CD8-positive, alpha-beta memory T cell (primary cell): ENCODE measurements at regions of chr12 and their contacts with region 1.

Region 1: GRCh38 chr12:11981121-11981733 is 89.5 kb upstream of the BCL2L14 start:
- DNase-seq: peak; percentile 3 to 88 (median 65)
- H3K4me3 ChIP-seq: peak overlapping the region; percentile 35
- H3K4me3 Mint-ChIP-seq: peak overlapping the region; percentile 0 to 76 (median 58)
- H3K27ac ChIP-seq: peak overlapping the region; percentile 49
- H3K27ac Mint-ChIP-seq: peak overlapping the region; percentile 55 to 99 (median 94)
- H3K4me1 ChIP-seq: peaks cover 32% of the 10 kb centered on the region
- H3K4me1 Mint-ChIP-seq: peaks cover 41 to 64% (median 62%) of the 10 kb centered on the region in 3 donors
- H3K27me3 ChIP-seq: no peaks in the 10 kb centered on the region
- H3K27me3 Mint-ChIP-seq: no peaks in the 10 kb centered on the region

Region 2: GRCh38 chr12:11929714-11930113 is 51.5 kb before region 1 on chr12:
- CTCF ChIA-PET with region 1: no interaction called
- POLR2A ChIA-PET with region 1: interaction called, 10 read pairs
- DNase-seq: no peak
- H3K4me3 ChIP-seq: no peak overlapping the region
- H3K4me3 Mint-ChIP-seq: no peak overlapping the region
- H3K27ac ChIP-seq: no peak overlapping the region
- H3K27ac Mint-ChIP-seq: peak overlapping the region in 1 of 8 donors; percentile 89
- H3K4me1 ChIP-seq: no peaks in the 10 kb centered on the region
- H3K4me1 Mint-ChIP-seq: no peaks in the 10 kb centered on the region
- H3K27me3 ChIP-seq: no peaks in the 10 kb centered on the region
- H3K27me3 Mint-ChIP-seq: peaks cover 2 to 6% of the 10 kb centered on the region in 2 donors